Activated CD4-positive, alpha-beta T cell treated with anti-CD3 and anti-CD28 coated beads for 36 hours (primary cell): ENCODE measurements at regions of chr7 and their contacts with region 1.

Region 1: DNA sequence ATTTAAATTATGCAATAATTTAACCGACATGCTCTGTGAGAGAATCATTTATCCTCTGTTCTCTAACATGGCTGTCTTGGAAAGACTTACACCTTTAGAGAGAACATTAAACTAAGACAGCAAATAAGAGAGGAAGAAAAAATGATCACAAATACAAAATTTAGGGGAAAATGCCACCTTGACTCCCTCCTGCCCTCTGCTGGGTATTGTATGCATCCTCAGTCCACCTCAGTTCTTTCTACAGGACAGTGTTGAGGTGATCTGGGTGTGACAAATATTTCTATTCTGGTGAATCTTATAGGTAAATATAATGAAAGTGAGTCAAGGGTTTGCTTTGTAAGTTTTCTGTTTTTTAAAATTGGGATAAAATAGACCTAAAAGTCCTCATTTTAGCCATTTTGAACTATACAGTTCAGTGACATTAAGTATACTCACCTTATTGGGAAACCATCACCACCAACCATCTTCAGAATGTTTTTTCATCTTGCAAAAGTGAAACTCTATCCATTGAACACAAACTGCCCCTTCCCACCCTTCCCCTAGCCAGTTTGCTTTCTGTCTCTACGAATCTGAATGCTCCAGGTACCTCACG is 61.5 kb upstream of the ELMO1 start:
- DNase-seq: peak; percentile 52
- ATAC-seq: peak; percentile 74
- H3K4me3 Mint-ChIP-seq: no peak overlapping the region
- H3K27ac Mint-ChIP-seq: no peak overlapping the region
- H3K4me1 Mint-ChIP-seq: no peaks in the 10 kb centered on the region
- H3K27me3 Mint-ChIP-seq: no peaks in the 10 kb centered on the region

Region 2: DNA sequence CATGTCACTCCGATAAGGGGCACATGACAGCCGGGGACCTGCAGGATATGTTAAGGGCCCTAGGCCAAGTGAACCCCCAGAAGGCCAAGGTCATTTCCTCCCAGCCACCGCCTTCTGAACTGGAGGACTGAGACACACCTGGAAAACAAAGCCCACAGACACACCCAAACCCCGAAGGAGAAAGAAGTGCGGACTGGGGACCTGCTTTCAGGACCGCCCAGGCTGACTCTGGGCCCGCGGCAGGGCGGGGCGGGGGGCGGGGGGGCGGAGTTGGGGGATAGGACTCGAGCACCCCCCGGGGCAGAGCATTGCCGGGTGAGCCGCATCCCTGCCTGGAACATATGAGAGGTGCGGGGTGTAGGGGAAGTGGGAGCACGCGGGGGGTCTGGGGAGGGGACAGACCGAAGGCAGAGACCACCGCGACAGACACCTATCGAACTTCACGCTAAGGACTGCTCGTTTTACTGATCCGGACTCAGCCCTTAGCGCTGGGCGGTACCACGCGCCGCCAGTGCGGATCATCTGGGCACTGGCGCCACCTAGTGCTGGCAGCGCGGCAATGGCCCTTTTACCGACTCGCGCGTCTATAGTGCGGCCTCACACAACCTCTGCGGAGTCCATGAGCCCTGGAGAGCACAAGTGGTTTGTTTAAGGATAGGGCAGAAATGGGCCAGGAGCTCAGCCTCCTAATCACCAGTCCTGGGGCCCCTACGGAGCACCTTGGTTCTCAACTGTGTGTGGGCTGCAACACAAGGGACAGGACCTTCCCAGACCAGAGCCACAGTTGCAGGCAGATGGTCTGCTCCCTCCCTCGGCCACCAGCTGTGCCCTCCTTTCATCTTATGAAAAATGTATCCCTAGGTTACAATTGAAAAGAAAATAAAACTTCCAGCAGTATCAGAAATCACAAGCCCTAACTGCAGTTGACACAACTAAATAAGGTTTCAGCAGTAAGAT is 1972.8 kb before region 1 on chr7:
- CTCF ChIA-PET with region 1: no interaction called
- POLR2A ChIA-PET with region 1: no interaction called
- intact Hi-C with region 1: no loop called
- DNase-seq: peak; percentile 87
- ATAC-seq: peak; percentile 99
- H3K4me3 Mint-ChIP-seq: peak overlapping the region; percentile 56
- H3K27ac Mint-ChIP-seq: no peak overlapping the region
- H3K4me1 Mint-ChIP-seq: no peaks in the 10 kb centered on the region
- H3K27me3 Mint-ChIP-seq: peaks cover 9% of the 10 kb centered on the region

Region 3: DNA sequence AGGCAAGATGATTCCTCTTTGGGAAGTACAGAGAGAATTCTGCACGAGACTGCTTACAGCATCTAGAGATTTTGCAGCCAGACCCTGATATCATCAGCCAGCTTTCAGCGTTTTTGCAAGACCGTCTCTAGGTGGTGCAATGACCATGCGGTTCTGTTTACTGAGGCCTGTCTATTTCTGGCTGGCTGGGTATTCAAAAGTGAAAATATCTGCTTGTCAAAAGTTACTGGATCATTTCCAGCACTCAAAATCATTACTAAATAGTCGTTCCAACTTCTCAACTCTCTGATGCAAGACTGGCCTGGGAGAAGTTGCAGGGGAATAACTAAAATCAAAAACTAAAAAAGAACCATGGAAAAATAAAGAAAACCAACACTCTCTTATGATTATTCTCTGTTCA is 301.6 kb before region 1 on chr7:
- CTCF ChIA-PET with region 1: interaction called, 3 read pairs
- POLR2A ChIA-PET with region 1: no interaction called
- intact Hi-C with region 1: loop called in 1 of 2 experiments (anchors 5 kb)
- DNase-seq: peak; percentile 34
- ATAC-seq: no peak
- H3K4me3 Mint-ChIP-seq: no peak overlapping the region
- H3K27ac Mint-ChIP-seq: peak overlapping the region; percentile 26
- H3K4me1 Mint-ChIP-seq: peaks cover 16% of the 10 kb centered on the region
- H3K27me3 Mint-ChIP-seq: no peaks in the 10 kb centered on the region

Region 4: DNA sequence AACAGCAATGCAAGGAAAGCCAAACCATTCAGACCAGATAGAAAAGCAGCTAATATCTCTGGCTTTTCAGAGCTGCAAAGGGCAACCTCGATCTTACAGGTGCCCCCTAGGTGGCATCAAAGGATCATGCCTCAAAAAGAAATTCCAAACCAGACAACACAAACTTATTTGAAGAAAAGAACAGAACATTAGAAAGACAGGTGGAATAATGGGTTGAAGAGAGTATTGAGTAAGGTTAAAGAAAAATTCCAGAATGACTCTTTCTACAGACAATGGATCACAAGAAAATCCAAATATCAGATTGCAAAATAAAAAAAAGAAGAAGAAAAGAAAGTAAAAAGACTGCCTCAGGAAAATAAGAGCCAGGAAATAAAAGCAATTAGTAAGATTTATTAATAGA is 275.2 kb before region 1 on chr7:
- CTCF ChIA-PET with region 1: interaction called, 27 read pairs
- POLR2A ChIA-PET with region 1: no interaction called
- intact Hi-C with region 1: loop called in 1 of 2 experiments (anchors 1 kb)
- DNase-seq: peak; percentile 19
- ATAC-seq: no peak
- H3K4me3 Mint-ChIP-seq: no peak overlapping the region
- H3K27ac Mint-ChIP-seq: no peak overlapping the region
- H3K4me1 Mint-ChIP-seq: peaks cover 16% of the 10 kb centered on the region
- H3K27me3 Mint-ChIP-seq: no peaks in the 10 kb centered on the region

Region 5: DNA sequence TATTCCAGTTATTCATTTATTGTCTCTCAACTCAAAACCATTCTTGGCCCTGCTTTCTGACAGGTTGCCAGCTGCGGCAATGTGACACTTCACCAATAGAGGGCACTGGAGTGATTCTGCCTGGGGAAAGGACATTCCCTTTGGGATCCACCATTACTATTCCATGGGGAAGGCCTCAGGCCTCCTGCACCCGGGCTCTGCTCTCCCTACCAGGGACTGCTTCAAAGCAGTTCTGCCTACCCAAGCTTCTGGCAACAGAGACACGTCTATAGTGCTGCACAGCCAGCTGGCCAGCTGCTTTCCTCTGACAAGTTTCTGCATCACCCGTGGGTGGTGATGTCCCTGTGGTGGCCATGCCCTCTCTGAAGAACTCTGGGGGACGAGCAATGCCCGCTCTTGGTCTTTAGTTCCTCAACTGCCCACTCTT is 225.3 kb before region 1 on chr7:
- CTCF ChIA-PET with region 1: interaction called, 6 read pairs
- POLR2A ChIA-PET with region 1: no interaction called
- intact Hi-C with region 1: loop called in 1 of 2 experiments (anchors 1 kb)
- DNase-seq: peak; percentile 62
- ATAC-seq: peak; percentile 33
- H3K4me3 Mint-ChIP-seq: no peak overlapping the region
- H3K27ac Mint-ChIP-seq: peak overlapping the region; percentile 8
- H3K4me1 Mint-ChIP-seq: peaks cover 47% of the 10 kb centered on the region
- H3K27me3 Mint-ChIP-seq: no peaks in the 10 kb centered on the region

Region 6: DNA sequence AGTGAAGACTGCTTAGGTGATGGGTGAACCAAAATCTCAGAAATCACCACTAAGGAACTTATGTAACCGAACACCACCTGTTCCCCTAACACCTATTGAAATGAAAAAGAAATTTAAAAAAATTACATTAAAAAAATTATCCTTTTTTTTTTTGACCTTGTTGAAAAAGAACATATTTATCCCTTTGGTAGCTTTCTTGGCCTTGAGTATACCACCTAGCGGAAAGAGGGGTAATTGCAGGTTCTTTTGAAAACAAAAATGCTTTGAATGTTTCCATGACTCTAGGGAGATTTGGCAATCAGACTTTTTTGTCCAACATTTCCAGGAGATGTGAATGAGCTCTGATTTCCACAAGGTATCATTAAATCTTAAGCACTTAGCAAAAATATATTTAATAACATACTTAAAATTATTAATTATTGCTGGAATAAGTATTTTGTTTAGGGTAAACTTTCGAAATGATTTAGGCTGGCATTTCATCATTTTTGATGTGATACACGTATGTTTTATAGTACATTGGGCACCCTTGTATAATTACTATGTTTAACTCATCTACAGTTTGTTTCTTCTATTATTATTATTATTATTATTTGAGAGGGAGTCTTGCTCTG is 14.5 kb before region 1 on chr7:
- CTCF ChIA-PET with region 1: interaction called, 70 read pairs
- POLR2A ChIA-PET with region 1: no interaction called
- intact Hi-C with region 1: no loop called
- DNase-seq: no peak
- ATAC-seq: no peak
- H3K4me3 Mint-ChIP-seq: no peak overlapping the region
- H3K27ac Mint-ChIP-seq: no peak overlapping the region
- H3K4me1 Mint-ChIP-seq: peaks cover 8% of the 10 kb centered on the region
- H3K27me3 Mint-ChIP-seq: no peaks in the 10 kb centered on the region

Region 7: DNA sequence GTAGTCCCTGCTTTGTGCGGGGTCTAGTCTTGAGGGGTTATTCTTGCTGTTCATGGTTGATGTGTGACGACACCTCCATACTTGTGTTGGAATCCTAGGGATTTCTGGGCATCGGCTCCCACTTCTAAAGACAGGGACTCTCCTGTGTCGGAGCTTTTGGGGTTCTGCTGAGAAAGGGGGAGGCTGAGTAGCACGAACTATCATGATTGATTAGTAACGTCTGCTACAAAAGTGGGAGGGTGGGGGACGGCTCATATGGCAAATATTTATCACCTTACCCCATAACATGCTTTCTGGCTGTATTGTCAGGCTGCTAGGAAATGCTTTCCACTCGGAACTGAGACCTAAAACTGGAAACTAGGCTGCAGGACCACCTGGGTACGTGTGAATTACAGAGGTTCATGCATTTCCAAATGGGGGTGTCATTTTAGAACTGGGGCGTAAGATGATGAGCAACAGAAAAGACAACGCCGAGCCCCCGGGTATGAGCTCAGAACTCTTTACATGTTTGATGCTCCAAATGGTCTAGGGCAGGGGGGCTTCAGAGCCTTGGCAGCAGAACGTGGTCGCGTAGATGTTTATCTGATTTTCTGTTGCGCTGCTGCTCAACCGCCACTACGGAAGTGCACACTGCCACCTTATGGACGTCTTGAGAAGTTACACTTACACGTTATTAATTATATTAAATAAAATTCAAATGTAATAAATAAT is 323.1 kb after region 1 on chr7:
- CTCF ChIA-PET with region 1: no interaction called
- POLR2A ChIA-PET with region 1: no interaction called
- intact Hi-C with region 1: loop called in 1 of 2 experiments (anchors 5 kb)
- DNase-seq: peak; percentile 61
- ATAC-seq: no peak
- H3K4me3 Mint-ChIP-seq: peak overlapping the region; percentile 67
- H3K27ac Mint-ChIP-seq: no peak overlapping the region
- H3K4me1 Mint-ChIP-seq: peaks cover 4% of the 10 kb centered on the region
- H3K27me3 Mint-ChIP-seq: peaks cover 5% of the 10 kb centered on the region